ENCODE measurements at regions of chr7 and their contacts with region 1.

Region 1: GRCh38 chr7:47444379-47445057 is 137.4 kb downstream of the TNS3 start:
- DNase-seq: no peak
- ATAC-seq: peak; percentile 72
- H3K4me3 Mint-ChIP-seq: no peak overlapping the region
- H3K27ac Mint-ChIP-seq: no peak overlapping the region
- H3K4me1 Mint-ChIP-seq: peaks cover 22% of the 10 kb centered on the region
- H3K27me3 Mint-ChIP-seq: no peaks in the 10 kb centered on the region
- CTCF ChIP-seq: no peak

Region 2: GRCh38 chr7:47266131-47266706 is 178.3 kb before region 1 on chr7:
- CTCF ChIA-PET with region 1: interaction called, 16 read pairs
- POLR2A ChIA-PET with region 1: no interaction called
- intact Hi-C with region 1: loop called (anchors 2 kb)
- DNase-seq: peak; percentile 50
- ATAC-seq: peak; percentile 92
- H3K4me3 Mint-ChIP-seq: no peak overlapping the region
- H3K27ac Mint-ChIP-seq: no peak overlapping the region
- H3K4me1 Mint-ChIP-seq: no peaks in the 10 kb centered on the region
- H3K27me3 Mint-ChIP-seq: no peaks in the 10 kb centered on the region
- CTCF ChIP-seq: peak; percentile 60

Region 3: DNA sequence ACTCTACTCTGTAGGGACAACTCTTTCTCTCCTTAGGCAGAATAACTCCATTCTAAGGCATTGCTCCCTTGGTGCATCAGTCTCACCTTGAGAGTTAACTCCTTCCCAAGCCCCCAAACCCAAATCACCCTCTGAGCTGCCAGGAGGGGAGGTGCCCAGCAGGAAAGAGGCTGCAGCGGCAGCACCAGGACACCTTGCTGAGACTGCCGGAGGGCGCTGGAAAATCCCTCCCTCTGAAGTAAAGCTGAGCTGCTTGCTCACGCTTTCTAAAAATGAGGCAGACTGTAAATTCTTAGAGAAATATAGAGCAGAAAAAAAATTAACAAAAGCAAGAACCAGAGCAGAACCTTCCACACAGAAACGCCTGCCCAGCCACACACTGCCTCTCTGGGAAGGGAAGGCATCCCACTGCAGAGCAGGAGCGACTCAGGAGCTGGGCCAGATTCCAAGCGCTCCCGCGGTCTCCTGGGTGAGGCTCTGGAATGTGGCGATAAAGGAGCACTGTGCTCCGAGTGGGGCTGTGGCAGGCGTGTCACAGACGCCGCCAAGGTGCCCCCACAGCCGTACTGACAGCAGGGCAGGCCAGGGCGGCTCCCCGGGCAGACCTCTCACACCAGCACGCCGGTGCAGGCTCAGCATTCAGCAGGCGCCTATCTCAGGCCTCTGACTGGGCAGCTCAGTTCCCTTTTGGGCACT is 64.7 kb before region 1 on chr7:
- CTCF ChIA-PET with region 1: no interaction called
- POLR2A ChIA-PET with region 1: no interaction called
- intact Hi-C with region 1: no loop called
- DNase-seq: no peak
- ATAC-seq: no peak
- H3K4me3 Mint-ChIP-seq: no peak overlapping the region
- H3K27ac Mint-ChIP-seq: no peak overlapping the region
- H3K4me1 Mint-ChIP-seq: no peaks in the 10 kb centered on the region
- H3K27me3 Mint-ChIP-seq: no peaks in the 10 kb centered on the region
- CTCF ChIP-seq: no peak

Region 4: DNA sequence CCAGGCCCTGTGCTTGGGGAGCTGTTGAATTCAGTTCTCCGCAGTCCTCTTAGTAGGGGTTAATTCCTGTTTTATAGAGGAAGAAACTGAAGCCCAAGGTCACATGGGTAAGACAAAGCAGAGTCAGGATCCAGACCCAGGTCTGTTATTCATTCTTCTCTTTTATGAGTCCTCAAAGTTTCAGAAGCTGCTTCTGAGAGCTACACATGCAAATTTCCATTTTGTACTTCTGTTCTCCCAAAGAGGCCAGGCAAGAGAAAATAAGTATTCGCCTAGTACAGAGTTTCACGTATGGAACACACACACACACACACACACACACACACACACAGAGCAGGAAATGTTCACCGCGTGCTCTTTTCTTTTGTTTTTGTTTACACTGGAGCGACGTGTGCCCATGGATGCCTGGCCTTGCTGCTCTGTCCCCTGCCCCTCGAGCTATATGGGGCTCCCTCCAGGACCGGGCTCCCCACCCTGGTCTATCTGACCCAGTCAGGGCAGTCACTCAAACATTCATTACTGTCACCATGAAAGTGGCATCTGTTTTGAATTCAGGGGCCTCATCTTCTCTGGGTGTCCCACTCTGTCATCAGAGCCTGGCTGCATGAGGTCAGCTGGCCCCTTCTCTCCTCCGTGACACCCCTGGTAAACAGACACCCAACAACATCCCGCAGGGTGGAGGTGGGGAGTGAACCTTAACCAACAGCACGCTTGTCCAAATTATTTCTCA is 53.0 kb after region 1 on chr7:
- CTCF ChIA-PET with region 1: interaction called, 3 read pairs
- POLR2A ChIA-PET with region 1: no interaction called
- intact Hi-C with region 1: loop called (anchors 2 kb)
- DNase-seq: no peak
- ATAC-seq: peak; percentile 81
- H3K4me3 Mint-ChIP-seq: peak overlapping the region; percentile 64
- H3K27ac Mint-ChIP-seq: peak overlapping the region; percentile 87
- H3K4me1 Mint-ChIP-seq: peaks cover 70% of the 10 kb centered on the region
- H3K27me3 Mint-ChIP-seq: no peaks in the 10 kb centered on the region
- CTCF ChIP-seq: no peak

Region 5: GRCh38 chr7:47581806-47582763 is 137.6 kb after region 1 on chr7 and contains the start of gene TNS3:
- CTCF ChIA-PET with region 1: interaction called, 4 read pairs
- POLR2A ChIA-PET with region 1: no interaction called
- intact Hi-C with region 1: loop called (anchors 2 kb)
- DNase-seq: peak; percentile 64
- ATAC-seq: peak; percentile 80
- H3K4me3 Mint-ChIP-seq: peak within 1 kb of the TSS; percentile 87
- H3K27ac Mint-ChIP-seq: peak within 1 kb of the TSS; percentile 83
- H3K4me1 Mint-ChIP-seq: peaks cover 57% of the 10 kb centered on the region
- H3K27me3 Mint-ChIP-seq: no peaks in the 10 kb centered on the region
- CTCF ChIP-seq: no peak
- total RNA-seq, gene TNS3: 29.4 and 30.3 TPM in 2 replicates

Measured in activated B cell treated with CpG ODN at 0.5 μM for 24 hours (primary cell).